Sigmoid colon (tissue), 7 donors: ENCODE measurements at regions of chr11 and their contacts with region 1.

Region 1: GRCh38 chr11:66616379-66617154 is at the start of gene RBM14:
- DNase-seq: peak; percentile 100
- H3K4me3 ChIP-seq: peak within 1 kb of the TSS; percentile 82 to 94 (median 88)
- H3K27ac ChIP-seq: peak within 1 kb of the TSS; percentile 95 to 99 (median 98)
- H3K4me1 ChIP-seq: peaks cover 0 to 48% (median 40%) of the 10 kb centered on the region in 4 donors
- H3K27me3 ChIP-seq: no peaks in the 10 kb centered on the region
- CTCF ChIP-seq: no peak
- EP300 ChIP-seq: no peak
- POLR2A ChIP-seq: peak; percentile 99 to 100
- total RNA-seq, gene RBM14: 23.7 to 51.8 (median 42.9) TPM

Region 2: DNA sequence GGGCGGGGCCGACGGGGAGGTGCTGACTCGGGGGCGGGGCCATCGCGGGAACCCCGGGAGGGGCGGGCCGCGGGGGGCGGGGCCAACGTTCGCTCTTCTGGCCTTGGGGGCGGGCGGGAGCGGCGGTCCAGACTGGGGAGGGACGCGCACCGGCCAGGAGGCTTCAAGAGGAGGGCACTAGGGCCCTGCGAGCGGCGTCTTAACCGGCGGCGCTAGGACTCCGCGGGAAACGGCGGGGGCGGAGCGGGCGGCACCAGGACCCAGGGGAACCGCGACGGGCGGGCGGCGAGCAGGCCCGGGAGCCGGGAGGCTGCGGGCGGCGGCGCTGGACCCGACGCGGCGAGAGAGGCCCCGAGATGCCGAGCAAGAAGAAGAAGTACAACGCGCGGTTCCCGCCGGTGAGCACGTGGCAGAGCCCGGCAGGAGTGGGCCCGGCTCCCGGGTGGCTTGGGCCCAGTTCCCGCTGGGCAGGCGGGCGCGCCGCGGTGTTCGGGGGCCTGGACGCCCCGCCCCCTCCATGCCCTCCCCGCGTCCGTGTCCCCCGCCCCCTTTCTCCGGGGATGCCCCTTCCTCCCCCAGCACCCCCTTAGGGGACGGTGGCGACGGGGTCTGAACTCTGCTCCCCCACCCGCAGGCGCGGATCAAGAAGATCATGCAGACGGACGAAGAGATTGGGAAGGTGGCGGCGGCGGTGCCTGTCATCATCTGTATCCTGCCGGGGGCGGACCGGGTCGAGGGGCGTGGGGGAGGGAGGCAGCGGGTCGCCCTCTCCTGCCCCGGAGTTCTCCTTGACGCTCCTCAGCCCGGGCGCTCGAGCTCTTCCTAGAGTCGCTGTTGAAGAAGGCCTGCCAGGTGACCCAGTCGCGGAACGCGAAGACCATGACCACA is 697.2 kb before region 1 on chr11 and contains the start of gene DRAP1:
- intact Hi-C with region 1: no loop called
- DNase-seq: peak; percentile 99
- H3K4me3 ChIP-seq: peak within 1 kb of the TSS; percentile 90 to 99 (median 97)
- H3K27ac ChIP-seq: peak within 1 kb of the TSS; percentile 95 to 99 (median 98)
- H3K4me1 ChIP-seq: peaks cover 0 to 55% (median 53%) of the 10 kb centered on the region in 4 donors
- H3K27me3 ChIP-seq: no peaks in the 10 kb centered on the region
- CTCF ChIP-seq: no peak
- EP300 ChIP-seq: no peak
- POLR2A ChIP-seq: peak; percentile 14 to 32
- total RNA-seq, gene DRAP1: 58.9 to 115 (median 79.2) TPM

Region 3: GRCh38 chr11:66592457-66593302 is 23.9 kb before region 1 on chr11 and contains the starts of genes CCDC87 and CCS:
- intact Hi-C with region 1: loop called (anchors 2 kb)
- DNase-seq: peak; percentile 99
- H3K4me3 ChIP-seq: peak within 1 kb of the TSS; percentile 56 to 78 (median 62)
- H3K27ac ChIP-seq: peak within 1 kb of the TSS; percentile 85 to 88 (median 88)
- H3K4me1 ChIP-seq: peaks cover 0 to 45% (median 40%) of the 10 kb centered on the region in 4 donors
- H3K27me3 ChIP-seq: no peaks in the 10 kb centered on the region
- CTCF ChIP-seq: peak in 3 of 4 experiments; percentile 65 to 86 (median 85)
- EP300 ChIP-seq: no peak
- POLR2A ChIP-seq: peak; percentile 95
- total RNA-seq, gene CCDC87: 0.14 to 0.71 (median 0.16) TPM in 3 of 4 donors, not detected in the other
- total RNA-seq, gene CCS: 26.0 to 43.1 (median 40.5) TPM

Region 4: DNA sequence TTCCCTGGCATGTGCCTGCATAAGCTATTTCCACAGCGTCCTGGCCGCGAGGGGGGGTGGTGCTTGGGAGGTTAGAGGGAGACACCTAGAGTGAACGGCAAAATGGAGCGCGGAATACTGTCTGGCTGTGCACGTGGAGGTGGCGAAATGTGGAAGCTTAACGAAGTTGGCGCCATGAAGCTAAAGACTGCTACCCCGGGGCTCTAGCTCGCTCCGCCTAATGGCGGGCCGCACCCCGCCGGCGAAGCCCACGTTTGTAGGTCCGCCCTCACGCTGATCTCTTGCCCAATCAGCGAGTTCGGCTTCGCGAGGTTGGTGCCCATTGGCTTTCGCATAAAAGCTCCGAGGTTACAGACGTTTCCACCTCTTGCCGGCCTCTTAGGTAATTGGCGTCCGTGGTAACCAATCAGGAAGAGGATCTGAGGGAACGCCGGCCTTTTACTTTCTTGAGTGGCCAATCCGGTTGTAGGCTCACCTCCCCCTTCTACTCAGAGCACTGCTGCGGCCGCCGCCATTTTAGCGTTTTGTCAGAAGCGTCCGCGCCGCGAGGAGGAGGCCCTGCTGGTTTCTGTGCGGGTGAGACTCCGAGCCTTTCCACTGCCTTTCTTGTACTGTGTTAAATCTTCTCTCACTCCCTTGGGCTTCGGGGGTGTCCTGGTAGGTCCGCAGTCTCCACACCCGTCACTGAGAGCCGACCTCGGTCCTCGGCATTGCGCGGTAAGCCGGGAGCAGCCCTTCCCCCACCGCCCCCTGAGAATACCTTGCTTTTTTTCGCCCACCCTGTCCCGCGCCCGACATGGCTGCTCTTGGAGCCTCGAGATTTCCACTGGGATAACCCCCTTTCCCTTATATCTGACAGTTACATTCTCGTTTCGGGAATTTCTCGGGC is 21.9 kb after region 1 on chr11 and contains the start of gene RBM4:
- intact Hi-C with region 1: loop called (anchors 2 kb)
- DNase-seq: peak; percentile 100
- H3K4me3 ChIP-seq: peak within 1 kb of the TSS; percentile 58 to 77 (median 74)
- H3K27ac ChIP-seq: peak within 1 kb of the TSS; percentile 89 to 92 (median 92)
- H3K4me1 ChIP-seq: peaks cover 0 to 71% (median 59%) of the 10 kb centered on the region in 4 donors
- H3K27me3 ChIP-seq: no peaks in the 10 kb centered on the region
- CTCF ChIP-seq: no peak
- EP300 ChIP-seq: no peak
- POLR2A ChIP-seq: peak; percentile 89 to 93
- total RNA-seq, gene RBM4: 76.5 to 101 (median 86.2) TPM